A673 (cell line): ENCODE measurements at regions of chr10 and their contacts with region 1.

Region 1: DNA sequence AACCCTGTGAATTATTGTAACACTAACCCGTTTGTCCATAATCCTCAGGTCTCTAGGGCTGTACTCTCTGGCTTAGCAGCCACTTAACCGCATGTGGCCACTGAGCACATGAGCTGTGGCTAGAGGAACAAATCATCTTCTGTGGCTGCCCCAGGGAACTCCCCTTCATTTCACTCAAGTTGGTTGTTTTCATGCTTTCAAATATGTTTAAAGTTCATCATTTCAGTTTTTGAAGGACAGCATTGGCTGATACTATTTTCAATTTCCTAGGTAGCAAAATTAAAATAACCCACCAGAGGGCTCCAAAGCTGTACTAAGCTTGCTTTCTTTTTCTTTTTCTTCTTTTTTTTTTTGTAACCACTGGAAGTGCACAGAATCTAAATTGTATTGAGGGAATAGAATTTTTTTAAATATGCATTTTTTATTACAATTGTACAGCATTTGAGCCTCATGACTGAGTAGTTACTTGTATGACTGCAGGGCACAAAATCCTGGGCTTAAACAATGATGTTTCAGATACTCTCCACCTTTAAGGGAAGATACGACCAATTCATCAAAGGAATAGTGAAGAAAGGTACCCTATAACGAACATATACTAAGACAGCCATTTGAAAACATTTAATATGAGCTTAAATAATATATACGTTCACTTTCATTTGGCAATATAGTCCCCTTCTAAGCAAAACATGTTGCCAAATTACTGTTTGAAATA is 38.6 kb downstream of the MRC1 start:
- DNase-seq: peak; percentile 59
- H3K4me3 ChIP-seq: no peak overlapping the region
- H3K27ac ChIP-seq: no peak overlapping the region
- H3K4me1 ChIP-seq: peaks cover 45% of the 10 kb centered on the region
- H3K27me3 ChIP-seq: no peaks in the 10 kb centered on the region
- CTCF ChIP-seq: peak; percentile 75

Region 2: GRCh38 chr10:17586821-17587234 is 260.9 kb before region 1 on chr10:
- CTCF ChIA-PET with region 1: no interaction called
- POLR2A ChIA-PET with region 1: interaction called, 12 read pairs
- intact Hi-C with region 1: no loop called
- DNase-seq: peak; percentile 69
- H3K4me3 ChIP-seq: no peak overlapping the region
- H3K27ac ChIP-seq: no peak overlapping the region
- H3K4me1 ChIP-seq: peaks cover 10% of the 10 kb centered on the region
- H3K27me3 ChIP-seq: no peaks in the 10 kb centered on the region
- CTCF ChIP-seq: no peak

Region 3: GRCh38 chr10:17882557-17882956 is 34.8 kb after region 1 on chr10:
- CTCF ChIA-PET with region 1: no interaction called
- POLR2A ChIA-PET with region 1: no interaction called
- intact Hi-C with region 1: no loop called
- DNase-seq: peak; percentile 7
- H3K4me3 ChIP-seq: no peak overlapping the region
- H3K27ac ChIP-seq: no peak overlapping the region
- H3K4me1 ChIP-seq: no peaks in the 10 kb centered on the region
- H3K27me3 ChIP-seq: no peaks in the 10 kb centered on the region
- CTCF ChIP-seq: no peak

Region 4: GRCh38 chr10:18238870-18239485 is 391.2 kb after region 1 on chr10:
- CTCF ChIA-PET with region 1: interaction called, 3 read pairs
- POLR2A ChIA-PET with region 1: no interaction called
- intact Hi-C with region 1: loop called (anchors 1 kb)
- DNase-seq: peak; percentile 73
- H3K4me3 ChIP-seq: no peak overlapping the region
- H3K27ac ChIP-seq: peak overlapping the region; percentile 10
- H3K4me1 ChIP-seq: peaks cover 15% of the 10 kb centered on the region
- H3K27me3 ChIP-seq: no peaks in the 10 kb centered on the region
- CTCF ChIP-seq: peak; percentile 75

Region 5: DNA sequence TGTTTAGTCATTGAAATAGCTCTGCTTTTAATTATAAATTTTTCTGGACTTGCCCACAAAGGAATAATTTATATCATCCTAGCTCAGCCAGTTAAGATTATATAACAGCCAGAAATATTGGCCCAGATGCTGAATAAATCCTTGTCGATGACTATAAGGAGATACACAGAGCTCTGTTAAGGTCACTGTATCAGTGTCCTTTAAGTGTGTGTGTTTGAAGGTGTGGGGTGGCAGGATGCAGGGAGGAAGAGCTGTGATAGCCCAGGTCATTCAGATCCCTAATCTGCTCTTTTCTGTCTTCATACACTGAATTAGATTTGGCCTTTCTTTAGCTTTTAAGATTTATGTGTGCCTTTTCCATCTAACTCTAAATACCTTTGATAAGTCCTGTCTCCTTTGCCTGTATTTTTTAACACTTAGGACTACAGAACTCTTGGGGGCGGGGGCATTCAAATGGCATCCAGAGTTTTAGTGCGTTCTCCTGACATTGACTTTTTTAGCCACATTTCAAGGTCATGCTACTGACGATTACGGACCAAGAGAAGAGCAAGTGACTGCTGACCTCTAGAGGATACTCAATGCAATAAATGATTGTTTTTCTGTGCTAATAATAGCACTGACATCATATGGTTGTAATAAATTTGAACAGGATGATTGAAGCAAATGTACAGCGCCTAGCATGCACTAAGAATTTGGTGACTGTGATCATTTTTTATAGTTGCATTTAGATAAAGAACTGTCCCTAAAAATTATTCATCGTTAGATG is 464.8 kb after region 1 on chr10:
- CTCF ChIA-PET with region 1: no interaction called
- POLR2A ChIA-PET with region 1: no interaction called
- intact Hi-C with region 1: loop called (anchors 10 kb)
- DNase-seq: peak; percentile 65
- H3K4me3 ChIP-seq: no peak overlapping the region
- H3K27ac ChIP-seq: no peak overlapping the region
- H3K4me1 ChIP-seq: peaks cover 8% of the 10 kb centered on the region
- H3K27me3 ChIP-seq: no peaks in the 10 kb centered on the region
- CTCF ChIP-seq: peak; percentile 64